Vagina (tissue), 2 donors: ENCODE measurements at regions of chr1 and their contacts with region 1.

Region 1: DNA sequence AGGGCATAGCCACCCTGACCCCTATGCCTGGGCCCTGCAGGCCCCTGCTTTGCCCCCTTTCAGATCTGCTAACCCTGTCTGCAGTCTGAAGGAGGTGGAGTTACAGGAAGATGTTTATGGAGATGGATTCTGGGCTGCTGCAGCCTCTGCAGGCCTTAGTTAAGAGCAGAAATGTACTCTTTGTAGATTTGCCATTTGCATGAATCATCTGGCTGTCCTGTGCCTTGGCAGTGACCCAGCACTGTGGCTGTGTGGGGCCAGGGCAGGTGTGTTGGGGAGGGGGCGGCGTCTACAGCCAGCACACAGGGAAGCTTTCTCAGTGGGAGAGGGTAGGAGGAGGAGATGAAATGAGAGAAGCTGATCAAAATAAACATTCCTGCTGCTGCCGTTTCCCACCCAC is 867.3 kb downstream of the PLA2G4A start:
- DNase-seq: no peak
- H3K4me3 ChIP-seq: no peak overlapping the region
- H3K27ac ChIP-seq: no peak overlapping the region
- H3K4me1 ChIP-seq: no peaks in the 10 kb centered on the region
- H3K27me3 ChIP-seq: no peaks in the 10 kb centered on the region
- CTCF ChIP-seq: no peak
- POLR2A ChIP-seq: no peak

Region 2: GRCh38 chr1:188302746-188303145 is 606.7 kb after region 1 on chr1:
- intact Hi-C with region 1: loop called (anchors 10 kb)
- DNase-seq: no peak
- H3K4me3 ChIP-seq: no peak overlapping the region
- H3K27ac ChIP-seq: no peak overlapping the region
- H3K4me1 ChIP-seq: no peaks in the 10 kb centered on the region
- H3K27me3 ChIP-seq: no peaks in the 10 kb centered on the region
- CTCF ChIP-seq: no peak
- POLR2A ChIP-seq: no peak